WTC11 (cell line): ENCODE measurements at regions of chr16 and their contacts with region 1.

Region 1: DNA sequence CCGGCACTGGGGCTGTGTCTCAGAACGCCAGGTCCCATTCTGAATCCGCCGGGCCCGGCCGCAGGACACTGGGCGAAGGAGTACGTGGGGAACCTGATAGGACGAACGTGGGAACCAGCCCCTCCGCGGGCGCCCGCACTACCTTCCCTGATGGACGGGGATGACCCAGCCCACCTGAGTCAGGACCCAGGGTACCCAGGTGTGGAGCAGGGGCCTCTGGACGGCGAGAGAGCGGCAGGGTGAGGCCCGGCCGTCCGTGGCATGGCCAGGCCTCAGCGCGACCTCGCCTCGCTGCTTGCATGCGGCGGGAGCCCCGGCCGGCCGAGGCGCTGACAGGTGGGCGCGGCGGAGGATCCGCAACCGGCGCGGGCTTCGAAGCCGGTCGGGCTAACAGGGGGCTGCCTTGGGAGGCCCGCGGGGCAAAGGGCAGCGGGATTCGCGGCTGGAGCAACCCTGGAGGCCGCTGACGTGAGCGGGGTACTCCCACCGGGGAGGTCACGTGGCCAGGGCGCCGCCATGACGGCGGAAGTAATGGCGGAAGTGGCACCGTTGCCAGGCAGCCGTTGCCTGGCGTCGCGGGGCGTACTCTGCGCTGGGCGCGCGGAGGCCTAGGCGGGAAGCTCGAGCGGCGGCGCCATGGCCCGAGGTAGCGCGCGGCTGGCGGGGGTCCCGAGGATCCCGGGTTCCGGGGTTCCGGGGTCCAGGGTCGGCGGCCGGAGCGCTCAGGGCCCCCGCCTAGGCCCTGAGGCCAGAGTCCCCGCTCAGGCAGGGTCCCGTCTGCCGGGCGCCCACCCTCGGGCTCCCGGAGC is at the start of gene WDR90:
- DNase-seq: peak; percentile 94
- ATAC-seq: peak; percentile 67
- H3K4me3 Mint-ChIP-seq: peak within 1 kb of the TSS; percentile 73
- H3K27ac Mint-ChIP-seq: no peak within 1 kb of the TSS; the same call in 1 of the 2 replicates
- H3K4me1 Mint-ChIP-seq: peaks cover 9% of the 10 kb centered on the region; the same call in 1 of the 2 replicates
- H3K27me3 Mint-ChIP-seq: no peaks in the 10 kb centered on the region
- CTCF ChIP-seq: no peak
- total RNA-seq, gene WDR90: 66.2 to 75.8 TPM (median 69.6 TPM) in 3 replicates

Region 2: DNA sequence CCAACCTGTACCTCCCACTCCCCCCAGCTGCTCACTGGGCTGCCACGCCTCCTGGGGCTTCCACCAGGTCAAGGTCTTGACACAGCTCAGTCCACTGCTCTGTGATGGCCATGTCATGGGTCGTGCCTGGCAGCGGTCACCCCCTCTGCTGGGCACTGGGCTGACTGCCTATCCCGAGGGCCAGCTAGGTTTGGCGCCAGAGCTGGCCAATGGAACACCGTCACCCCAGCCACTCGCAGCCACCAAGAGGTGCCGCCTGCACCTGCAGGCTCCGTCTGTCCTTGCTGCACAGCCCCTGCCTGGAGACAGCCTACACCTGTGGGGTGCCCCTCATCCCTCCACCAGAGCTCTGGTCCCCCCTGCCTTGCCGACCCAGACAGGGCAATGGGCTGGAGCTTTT is 63.6 kb before region 1 on chr16:
- CTCF ChIA-PET with region 1: interaction called, 11 read pairs
- POLR2A ChIA-PET with region 1: no interaction called
- DNase-seq: no peak
- ATAC-seq: peak; percentile 0; the same call in 1 of the 2 replicates
- H3K4me3 Mint-ChIP-seq: no peak overlapping the region
- H3K27ac Mint-ChIP-seq: no peak overlapping the region
- H3K4me1 Mint-ChIP-seq: peaks cover 12% of the 10 kb centered on the region
- H3K27me3 Mint-ChIP-seq: peaks cover 32% of the 10 kb centered on the region
- CTCF ChIP-seq: no peak

Region 3: GRCh38 chr16:621528-622105 is 27.4 kb before region 1 on chr16:
- CTCF ChIA-PET with region 1: interaction called, 18 read pairs
- POLR2A ChIA-PET with region 1: no interaction called
- DNase-seq: no peak
- ATAC-seq: no peak
- H3K4me3 Mint-ChIP-seq: no peak overlapping the region
- H3K27ac Mint-ChIP-seq: peak overlapping the region; percentile 70
- H3K4me1 Mint-ChIP-seq: peaks cover 24% of the 10 kb centered on the region
- H3K27me3 Mint-ChIP-seq: no peaks in the 10 kb centered on the region
- CTCF ChIP-seq: no peak

Region 4: DNA sequence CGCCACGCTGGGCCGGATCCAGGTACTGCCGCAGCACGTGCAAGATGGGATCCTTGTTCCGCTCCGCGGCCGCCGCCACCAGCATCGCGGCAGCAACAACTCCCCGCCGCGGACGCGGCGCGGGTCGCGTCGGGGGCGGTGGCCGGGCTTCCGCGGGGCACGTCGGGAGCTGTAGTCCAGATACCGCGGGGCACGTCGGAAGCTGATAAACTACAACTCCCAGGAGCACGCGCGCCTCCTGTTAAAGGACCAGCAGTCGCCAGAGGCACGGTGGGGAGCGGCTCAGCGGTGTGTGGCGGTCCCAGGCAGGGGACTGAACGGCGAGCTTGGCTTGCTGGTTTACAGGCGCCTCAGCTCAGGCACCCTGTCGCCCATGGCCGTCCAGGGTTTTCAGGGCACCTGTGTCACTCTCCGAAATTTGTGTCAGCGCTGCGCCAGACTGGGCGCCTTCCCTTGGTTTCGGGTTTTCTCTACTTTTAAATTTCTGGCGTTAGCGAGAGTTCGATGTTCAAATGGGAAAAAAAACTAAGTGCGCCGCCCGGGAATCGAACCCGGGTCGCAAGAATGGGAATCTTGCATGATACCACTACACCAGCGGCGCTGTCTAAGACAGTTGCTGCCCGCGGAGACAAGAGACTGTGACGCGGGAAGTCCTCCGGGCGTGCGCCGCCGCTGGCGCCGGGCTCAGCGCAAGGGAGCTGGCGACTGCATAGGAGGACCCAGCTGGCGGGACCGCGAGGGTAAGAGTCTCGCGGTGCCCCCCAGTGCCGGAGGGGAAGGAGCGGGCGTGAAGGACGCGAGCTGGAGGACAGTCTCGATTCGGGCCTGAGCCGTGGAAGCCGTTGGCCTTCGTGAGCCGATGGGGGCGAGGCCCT is 12.5 kb before region 1 on chr16 and contains the start of gene METTL26:
- CTCF ChIA-PET with region 1: interaction called, 37 read pairs
- POLR2A ChIA-PET with region 1: interaction called, 7 read pairs
- DNase-seq: peak; percentile 94
- ATAC-seq: peak; percentile 73
- H3K4me3 Mint-ChIP-seq: peak within 1 kb of the TSS; percentile 97
- H3K27ac Mint-ChIP-seq: peak within 1 kb of the TSS; percentile 99
- H3K4me1 Mint-ChIP-seq: peaks cover 19% of the 10 kb centered on the region
- H3K27me3 Mint-ChIP-seq: peaks cover 4% of the 10 kb centered on the region; the same call in 1 of the 2 replicates
- CTCF ChIP-seq: no peak
- total RNA-seq, gene METTL26: 115 to 121 TPM (median 115 TPM) in 3 replicates

Region 5: GRCh38 chr16:667780-668518 is 19.0 kb after region 1 on chr16 and contains the start of gene RHOT2:
- CTCF ChIA-PET with region 1: interaction called, 16 read pairs
- POLR2A ChIA-PET with region 1: interaction called, 3 read pairs
- DNase-seq: peak; percentile 93
- ATAC-seq: peak; percentile 95
- H3K4me3 Mint-ChIP-seq: peak within 1 kb of the TSS; percentile 65
- H3K27ac Mint-ChIP-seq: peak within 1 kb of the TSS; percentile 86
- H3K4me1 Mint-ChIP-seq: no peaks in the 10 kb centered on the region
- H3K27me3 Mint-ChIP-seq: no peaks in the 10 kb centered on the region
- CTCF ChIP-seq: peak; percentile 66
- total RNA-seq, gene RHOT2: 245 to 285 TPM (median 250 TPM) in 3 replicates